ENCODE measurements at regions of chr5 and their contacts with region 1.

Region 1: DNA sequence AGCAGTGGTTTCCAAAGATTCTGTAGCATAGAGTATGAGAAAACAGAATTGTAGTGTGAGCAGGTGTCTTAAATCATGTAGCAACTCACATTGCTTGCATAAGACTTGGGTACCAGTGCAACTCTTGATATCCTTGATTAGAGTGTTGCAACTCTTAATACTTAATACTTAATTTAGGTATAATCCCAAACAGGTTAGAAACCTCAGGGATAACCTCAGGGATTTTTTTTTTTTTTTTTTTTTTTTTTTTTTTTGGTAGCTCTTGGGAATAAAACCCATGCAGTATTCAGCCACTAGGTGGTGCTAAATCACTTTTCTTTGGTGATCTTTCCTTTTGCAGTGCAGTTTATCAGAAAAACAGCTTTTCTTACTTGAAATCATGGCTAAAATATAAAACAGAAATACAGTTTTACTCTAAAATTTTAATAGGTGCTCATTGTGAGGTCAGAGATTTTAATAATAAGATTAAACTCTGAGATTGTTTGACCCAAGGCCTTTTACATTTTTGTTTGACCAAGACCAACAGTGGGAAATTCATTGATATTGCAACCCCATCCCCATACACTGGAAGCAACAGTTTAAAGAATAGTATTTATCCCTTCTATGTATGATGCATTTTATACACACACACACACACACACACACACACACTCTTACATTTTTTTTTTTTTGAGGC is 55.3 kb downstream of the ERAP1 start:
- DNase-seq: no peak
- H3K4me3 Mint-ChIP-seq: no peak overlapping the region
- H3K27ac Mint-ChIP-seq: no peak overlapping the region
- H3K4me1 Mint-ChIP-seq: peaks cover 15% of the 10 kb centered on the region
- H3K27me3 Mint-ChIP-seq: no peaks in the 10 kb centered on the region

Region 2: DNA sequence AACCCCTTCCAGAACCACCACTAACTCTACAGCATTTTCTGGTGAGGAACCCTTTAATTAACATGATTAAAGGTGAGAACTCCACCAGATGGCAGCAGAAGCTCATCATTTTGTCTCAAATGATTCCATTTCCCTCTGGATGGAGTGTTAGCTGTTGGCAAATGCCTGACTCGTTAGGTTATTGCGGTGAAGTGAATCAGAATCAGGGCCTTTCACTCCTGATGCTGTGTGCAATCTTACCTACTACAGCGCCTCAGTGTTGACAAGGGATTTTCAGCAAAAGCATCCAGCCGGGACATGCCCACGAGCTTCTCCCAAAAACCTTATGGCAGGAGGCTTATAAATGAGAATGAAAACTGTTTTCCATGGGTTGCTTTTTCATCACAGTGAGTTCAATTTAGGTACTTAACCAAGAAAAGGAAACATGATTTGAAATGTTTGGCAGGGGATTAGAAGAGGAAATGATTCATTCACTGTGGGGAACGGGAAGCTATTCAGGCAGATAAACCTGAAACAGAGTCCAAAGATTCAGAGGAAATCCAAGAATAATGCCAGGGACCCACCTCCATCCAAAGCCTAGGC is 138.3 kb before region 1 on chr5:
- CTCF ChIA-PET with region 1: interaction called, 29 read pairs
- POLR2A ChIA-PET with region 1: no interaction called
- intact Hi-C with region 1: loop called (anchors 1 kb)
- DNase-seq: peak; percentile 46
- H3K4me3 Mint-ChIP-seq: no peak overlapping the region
- H3K27ac Mint-ChIP-seq: no peak overlapping the region
- H3K4me1 Mint-ChIP-seq: peaks cover 5% of the 10 kb centered on the region
- H3K27me3 Mint-ChIP-seq: no peaks in the 10 kb centered on the region

Region 3: GRCh38 chr5:96771395-96771794 is 18.9 kb after region 1 on chr5:
- CTCF ChIA-PET with region 1: interaction called, 15 read pairs
- POLR2A ChIA-PET with region 1: no interaction called
- intact Hi-C with region 1: no loop called
- DNase-seq: no peak
- H3K4me3 Mint-ChIP-seq: no peak overlapping the region
- H3K27ac Mint-ChIP-seq: peak overlapping the region; percentile 79
- H3K4me1 Mint-ChIP-seq: peaks cover 14% of the 10 kb centered on the region
- H3K27me3 Mint-ChIP-seq: no peaks in the 10 kb centered on the region

Region 4: GRCh38 chr5:97044052-97044451 is 291.6 kb after region 1 on chr5:
- CTCF ChIA-PET with region 1: no interaction called
- POLR2A ChIA-PET with region 1: no interaction called
- intact Hi-C with region 1: loop called (anchors 1 kb)
- DNase-seq: no peak
- H3K4me3 Mint-ChIP-seq: no peak overlapping the region
- H3K27ac Mint-ChIP-seq: no peak overlapping the region
- H3K4me1 Mint-ChIP-seq: no peaks in the 10 kb centered on the region
- H3K27me3 Mint-ChIP-seq: no peaks in the 10 kb centered on the region

Region 5: GRCh38 chr5:97162045-97162444 is 409.6 kb after region 1 on chr5:
- CTCF ChIA-PET with region 1: interaction called, 50 read pairs
- POLR2A ChIA-PET with region 1: no interaction called
- intact Hi-C with region 1: loop called (anchors 1 kb)
- DNase-seq: peak; percentile 64
- H3K4me3 Mint-ChIP-seq: no peak overlapping the region
- H3K27ac Mint-ChIP-seq: no peak overlapping the region
- H3K4me1 Mint-ChIP-seq: peaks cover 17% of the 10 kb centered on the region
- H3K27me3 Mint-ChIP-seq: no peaks in the 10 kb centered on the region